H1 (cell line): ENCODE measurements at regions of chr7 and their contacts with region 1.

Region 1: DNA sequence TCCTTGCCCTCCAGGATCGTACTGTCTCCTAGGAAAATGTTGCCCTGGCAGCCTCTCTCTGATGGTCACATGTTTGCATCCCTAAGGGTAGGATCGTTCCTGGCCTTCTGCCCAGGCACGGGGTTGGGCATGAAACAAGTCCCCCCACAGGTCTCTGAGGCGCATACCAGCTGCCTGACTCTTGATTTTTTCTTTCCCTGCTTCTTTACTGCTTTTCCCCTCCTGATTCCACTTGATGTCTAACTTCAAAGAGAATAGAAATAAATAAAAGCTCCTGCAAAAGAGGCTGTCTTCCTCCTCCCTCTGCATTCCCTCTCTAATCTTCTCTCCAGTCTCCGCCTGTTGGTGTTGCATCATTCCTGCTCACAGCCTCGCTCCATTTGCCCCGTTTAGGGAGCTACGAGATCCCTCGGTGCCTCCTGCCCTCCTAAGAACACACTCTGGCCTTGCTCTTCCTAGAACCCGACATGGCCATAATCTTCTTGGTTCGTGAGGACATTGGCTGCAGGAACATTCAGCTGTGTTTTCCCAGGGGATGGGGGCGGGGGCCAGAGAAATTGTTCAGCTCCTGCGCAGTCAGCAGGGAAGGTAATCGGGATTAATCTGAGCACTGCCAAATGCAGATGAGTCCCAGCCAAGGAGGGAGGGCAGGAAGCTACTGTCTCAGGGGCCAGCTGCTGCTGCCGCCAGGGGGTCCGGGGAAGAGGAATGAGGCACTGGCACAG is 26.0 kb downstream of the LEP start:
- DNase-seq: peak in 1 of 2 experiments; percentile 72
- H3K4me3 ChIP-seq: peak overlapping the region in 2 of 4 experiments; percentile 11 to 38; a peak in 3 of 8 replicates
- H3K27ac ChIP-seq: peak overlapping the region; percentile 21; the same call in 1 of the 2 replicates
- H3K4me1 ChIP-seq: peaks cover 4 to 32% (median 21%) of the 10 kb centered on the region in 4 experiments
- H3K27me3 ChIP-seq: peaks cover 0 to 3% (median 1%) of the 10 kb centered on the region in 4 experiments; a peak in 2 of 7 replicates
- CTCF ChIP-seq: peak in 1 of 3 experiments; percentile 14; a peak in 1 of 4 replicates
- EP300 ChIP-seq: no peak
- POLR2A ChIP-seq: peak in 1 of 2 experiments; percentile 55; a peak in 1 of 3 replicates
- RAD21 ChIP-seq: peak in 1 of 2 experiments; percentile 22; a peak in 1 of 4 replicates

Region 2: GRCh38 chr7:128255271-128255670 is 11.8 kb before region 1 on chr7:
- CTCF ChIA-PET with region 1: interaction called, 5 read pairs
- POLR2A ChIA-PET with region 1: interaction called, 23 read pairs
- DNase-seq: no peak
- H3K4me3 ChIP-seq: no peak overlapping the region
- H3K27ac ChIP-seq: no peak overlapping the region
- H3K4me1 ChIP-seq: peaks cover 3 to 11% (median 8%) of the 10 kb centered on the region in 4 experiments
- H3K27me3 ChIP-seq: no peaks in the 10 kb centered on the region
- CTCF ChIP-seq: no peak
- EP300 ChIP-seq: no peak
- POLR2A ChIP-seq: no peak
- RAD21 ChIP-seq: no peak

Region 3: GRCh38 chr7:128284102-128284501 is 17.1 kb after region 1 on chr7:
- CTCF ChIA-PET with region 1: interaction called, 4 read pairs
- POLR2A ChIA-PET with region 1: interaction called, 10 read pairs
- DNase-seq: no peak
- H3K4me3 ChIP-seq: no peak overlapping the region
- H3K27ac ChIP-seq: no peak overlapping the region
- H3K4me1 ChIP-seq: no peaks in the 10 kb centered on the region
- H3K27me3 ChIP-seq: 0 out of 7 replicates have a peak, but pooled peaks cover 0 to 2% (median 0%) of the 10 kb centered on the region in 4 experiments
- CTCF ChIP-seq: no peak
- EP300 ChIP-seq: no peak
- POLR2A ChIP-seq: no peak
- RAD21 ChIP-seq: no peak

Region 4: DNA sequence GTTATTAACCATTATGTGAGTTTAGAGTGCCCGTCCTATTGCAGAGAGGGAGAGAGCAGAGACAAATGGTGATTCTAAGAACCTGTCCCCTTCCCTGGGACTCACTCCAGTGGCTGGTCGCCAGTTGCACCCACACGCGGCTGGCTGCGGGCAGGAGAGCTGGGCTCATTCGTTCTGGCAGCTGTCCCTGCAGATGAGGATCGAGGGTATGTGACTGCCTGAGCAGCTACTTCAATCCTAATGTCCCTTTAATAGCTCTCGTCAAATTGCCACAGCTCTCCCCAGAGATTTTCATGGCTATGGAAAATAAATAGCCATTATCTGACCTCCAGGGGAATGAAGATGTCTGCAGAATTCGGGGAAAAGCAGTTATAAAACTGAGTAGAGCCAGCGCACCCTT is 35.1 kb after region 1 on chr7:
- CTCF ChIA-PET with region 1: no interaction called
- POLR2A ChIA-PET with region 1: interaction called, 25 read pairs
- DNase-seq: no peak
- H3K4me3 ChIP-seq: no peak overlapping the region
- H3K27ac ChIP-seq: no peak overlapping the region
- H3K4me1 ChIP-seq: peaks cover 9 to 22% (median 16%) of the 10 kb centered on the region in 4 experiments
- H3K27me3 ChIP-seq: no peaks in the 10 kb centered on the region
- CTCF ChIP-seq: no peak
- EP300 ChIP-seq: no peak
- POLR2A ChIP-seq: no peak
- RAD21 ChIP-seq: no peak